Endothelial cell of umbilical vein (primary cell): ENCODE measurements at regions of chr5 and their contacts with region 1.

Region 1: GRCh38 chr5:179495906-179496455 is 54.4 kb upstream of the RUFY1 start:
- DNase-seq: no peak
- H3K4me3 ChIP-seq: no peak overlapping the region
- H3K27ac ChIP-seq: no peak overlapping the region
- H3K4me1 ChIP-seq: no peaks in the 10 kb centered on the region
- H3K27me3 ChIP-seq: no peaks in the 10 kb centered on the region
- CTCF ChIP-seq: no peak
- POLR2A ChIP-seq: no peak

Region 2: DNA sequence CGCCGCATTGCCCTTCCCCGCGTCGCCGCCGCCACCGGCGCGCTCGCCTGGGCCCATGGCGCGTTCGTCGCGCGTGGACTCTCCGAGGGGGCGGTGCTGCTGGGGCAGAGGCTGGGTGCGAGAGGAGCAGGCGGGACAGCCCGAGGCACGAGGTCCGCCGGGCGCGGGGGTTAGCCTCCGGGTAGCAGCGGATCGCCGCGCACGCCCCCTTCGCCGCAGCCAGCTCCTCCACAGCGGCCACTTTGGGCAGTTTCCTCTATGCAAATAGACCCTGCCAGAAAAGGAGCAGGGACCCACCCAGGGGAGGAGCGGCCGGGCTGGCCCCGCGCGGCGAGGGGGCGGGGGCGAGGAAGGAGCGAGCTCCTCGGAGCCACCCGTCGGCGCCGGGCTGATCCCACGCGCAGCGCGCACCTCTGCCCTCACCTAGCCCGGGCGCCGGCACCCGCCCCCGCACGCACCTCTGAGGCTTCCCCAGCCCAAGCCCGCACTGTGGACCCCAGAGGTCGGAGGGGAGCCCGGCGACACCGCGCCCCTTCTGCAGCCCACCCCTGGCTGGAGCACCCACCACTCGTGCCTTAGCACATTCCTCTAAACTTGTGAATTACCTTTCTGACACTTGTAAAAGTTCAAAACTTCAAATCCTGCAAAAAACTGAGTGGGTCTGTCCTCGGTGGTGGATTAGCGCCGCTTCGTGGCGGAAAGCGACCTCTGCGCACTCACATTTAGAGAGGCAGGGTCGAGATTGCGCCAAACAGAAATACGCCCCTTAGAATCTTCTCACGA is 905.6 kb before region 1 on chr5 and contains the start of gene COL23A1:
- CTCF ChIA-PET with region 1: no interaction called
- POLR2A ChIA-PET with region 1: no interaction called
- dilution Hi-C with region 1: no loop called
- intact Hi-C with region 1: loop called (anchors 5 kb)
- DNase-seq: peak; percentile 55
- H3K4me3 ChIP-seq: peak within 1 kb of the TSS in 1 of 3 experiments; percentile 29
- H3K27ac ChIP-seq: no peak within 1 kb of the TSS
- H3K4me1 ChIP-seq: peaks cover 6% of the 10 kb centered on the region
- H3K27me3 ChIP-seq: peaks cover 39 to 58% of the 10 kb centered on the region in 2 experiments
- CTCF ChIP-seq: peak; percentile 72 to 77
- POLR2A ChIP-seq: no peak
- total RNA-seq, gene COL23A1: not detected in 2 replicates

Region 3: DNA sequence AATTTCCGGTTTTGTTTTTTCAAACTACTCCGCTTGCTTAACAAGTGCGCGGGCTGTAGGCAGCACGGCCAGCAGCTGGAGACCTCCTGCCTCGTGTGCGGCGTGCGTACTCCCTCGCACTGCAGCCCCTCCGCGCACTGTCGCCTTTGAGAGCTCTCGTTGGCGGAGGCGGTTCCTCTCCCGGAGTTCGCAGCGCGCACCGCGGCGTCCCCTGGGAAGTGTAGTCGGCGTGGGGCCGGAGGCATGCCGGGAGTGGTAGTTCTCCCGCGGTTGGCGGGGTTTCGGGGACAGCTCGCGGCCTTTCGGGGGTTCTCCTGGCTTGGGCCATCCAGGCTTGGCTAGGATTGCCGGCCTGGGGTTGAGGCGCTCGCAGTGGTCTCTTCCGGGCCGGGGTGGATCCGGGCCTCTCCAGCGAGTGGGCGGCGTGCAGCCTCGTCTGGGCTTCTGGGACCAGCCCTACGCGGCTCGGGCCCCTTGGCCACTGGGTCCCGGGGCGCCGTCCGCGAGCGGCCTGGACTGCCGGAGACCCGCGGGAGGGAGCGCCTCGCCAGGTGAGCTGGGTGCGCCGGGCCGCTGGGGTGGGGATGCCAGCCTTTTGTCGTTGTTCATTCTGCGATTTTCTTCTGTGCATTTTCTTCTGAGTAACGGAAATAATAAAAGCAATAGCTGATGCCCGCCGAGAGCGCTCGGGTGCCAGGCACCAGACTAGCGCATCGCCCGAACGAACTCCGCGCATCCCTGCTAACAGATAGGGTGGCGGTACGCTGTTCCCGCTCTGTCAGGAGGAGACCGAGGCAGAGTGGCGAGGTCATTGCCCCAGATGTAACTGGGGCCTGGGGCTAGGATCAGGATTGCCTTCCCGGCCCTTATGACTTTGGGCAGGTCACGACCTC is 435.6 kb before region 1 on chr5 and contains the start of gene ZNF354C:
- CTCF ChIA-PET with region 1: interaction called, 6 read pairs
- POLR2A ChIA-PET with region 1: no interaction called
- dilution Hi-C with region 1: no loop called
- intact Hi-C with region 1: loop called (anchors 5 kb)
- DNase-seq: peak; percentile 93
- H3K4me3 ChIP-seq: peak within 1 kb of the TSS; percentile 1 to 73 (median 37)
- H3K27ac ChIP-seq: peak within 1 kb of the TSS; percentile 6
- H3K4me1 ChIP-seq: peaks cover 6% of the 10 kb centered on the region
- H3K27me3 ChIP-seq: no peaks in the 10 kb centered on the region
- CTCF ChIP-seq: no peak
- POLR2A ChIP-seq: peak; percentile 44
- total RNA-seq, gene ZNF354C: 4.7 and 5.0 TPM in 2 replicates

Region 4: DNA sequence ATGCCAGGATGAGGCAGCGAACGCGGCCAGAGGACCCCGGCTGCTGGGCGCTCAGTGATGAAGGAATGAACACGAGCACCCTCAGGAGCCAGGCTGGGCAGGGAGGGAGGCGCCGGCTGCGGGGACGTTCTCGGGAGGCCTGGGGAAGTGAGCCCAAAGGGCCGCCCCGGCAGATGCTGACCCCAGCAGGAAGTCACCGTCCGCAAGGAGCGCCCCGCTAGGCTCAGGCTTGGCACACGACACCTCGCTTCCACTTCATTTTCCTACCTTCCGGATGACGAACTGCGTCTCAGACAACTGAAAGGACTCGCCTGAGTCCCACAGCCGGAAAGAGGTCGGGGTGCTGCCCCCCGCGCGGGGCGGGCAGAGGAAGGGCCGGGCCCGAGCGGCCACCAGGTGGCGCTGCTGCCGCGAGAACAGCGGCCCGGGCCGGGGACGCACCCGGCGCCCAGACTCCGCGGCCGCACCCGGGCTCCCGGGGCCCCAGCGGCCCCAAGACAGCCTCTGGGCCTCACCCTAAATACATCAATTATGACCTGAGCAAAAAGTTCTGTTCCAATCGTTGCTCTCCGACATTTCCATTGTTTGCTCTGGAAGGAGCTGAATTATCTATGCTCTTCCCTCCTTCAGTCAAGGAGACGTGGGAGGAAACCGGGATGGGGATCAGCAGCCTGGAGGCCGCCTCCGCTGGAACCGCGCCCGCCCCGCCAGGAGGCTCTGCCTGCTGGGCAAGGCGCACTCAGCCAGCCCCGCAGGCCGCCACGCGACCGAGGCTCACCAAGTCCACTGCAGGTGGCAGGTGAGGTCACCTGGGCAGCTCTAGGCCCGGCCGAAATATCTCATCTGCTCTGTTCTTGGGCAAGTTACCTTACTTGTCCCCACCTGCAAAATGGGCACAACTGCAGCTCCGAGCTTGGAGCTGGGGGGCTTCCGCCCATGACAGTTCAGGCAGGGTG is 328.8 kb before region 1 on chr5:
- CTCF ChIA-PET with region 1: interaction called, 13 read pairs
- POLR2A ChIA-PET with region 1: no interaction called
- dilution Hi-C with region 1: no loop called
- intact Hi-C with region 1: no loop called
- DNase-seq: no peak
- H3K4me3 ChIP-seq: no peak overlapping the region
- H3K27ac ChIP-seq: no peak overlapping the region
- H3K4me1 ChIP-seq: no peaks in the 10 kb centered on the region
- H3K27me3 ChIP-seq: no peaks in the 10 kb centered on the region
- CTCF ChIP-seq: peak; percentile 53 to 69
- POLR2A ChIP-seq: no peak

Region 5: GRCh38 chr5:179468696-179469095 is 27.3 kb before region 1 on chr5:
- CTCF ChIA-PET with region 1: no interaction called
- POLR2A ChIA-PET with region 1: no interaction called
- dilution Hi-C with region 1: no loop called
- intact Hi-C with region 1: no loop called
- DNase-seq: no peak
- H3K4me3 ChIP-seq: no peak overlapping the region
- H3K27ac ChIP-seq: no peak overlapping the region
- H3K4me1 ChIP-seq: no peaks in the 10 kb centered on the region
- H3K27me3 ChIP-seq: no peaks in the 10 kb centered on the region
- CTCF ChIP-seq: no peak
- POLR2A ChIP-seq: no peak